ENCODE measurements at regions of chr11 and their contacts with region 1.

Region 1: GRCh38 chr11:78645226-78646202 is 70.8 kb upstream of the NARS2 start:
- DNase-seq: peak; percentile 80
- H3K4me3 ChIP-seq: no peak overlapping the region; a peak in 1 of 4 replicates
- H3K27ac ChIP-seq: no peak overlapping the region
- H3K4me1 ChIP-seq: peaks cover 0 to 8% of the 10 kb centered on the region in 2 experiments; a peak in 1 of 4 replicates
- H3K27me3 ChIP-seq: no peaks in the 10 kb centered on the region
- CTCF ChIP-seq: peak; percentile 98
- EP300 ChIP-seq: no peak
- RAD21 ChIP-seq: peak; percentile 97

Region 2: GRCh38 chr11:78504181-78504580 is 141.3 kb before region 1 on chr11:
- CTCF ChIA-PET with region 1: no interaction called
- POLR2A ChIA-PET with region 1: no interaction called
- DNase-seq: no peak
- H3K4me3 ChIP-seq: no peak overlapping the region
- H3K27ac ChIP-seq: peak overlapping the region in 1 of 2 experiments; percentile 48; a peak in 2 of 4 replicates
- H3K4me1 ChIP-seq: peaks cover 0 to 8% of the 10 kb centered on the region in 2 experiments; a peak in 2 of 4 replicates
- H3K27me3 ChIP-seq: no peaks in the 10 kb centered on the region
- CTCF ChIP-seq: no peak
- EP300 ChIP-seq: no peak
- RAD21 ChIP-seq: no peak

Region 3: GRCh38 chr11:78533399-78533798 is 112.1 kb before region 1 on chr11:
- CTCF ChIA-PET with region 1: no interaction called
- POLR2A ChIA-PET with region 1: no interaction called
- DNase-seq: no peak
- H3K4me3 ChIP-seq: no peak overlapping the region
- H3K27ac ChIP-seq: no peak overlapping the region
- H3K4me1 ChIP-seq: no peaks in the 10 kb centered on the region
- H3K27me3 ChIP-seq: no peaks in the 10 kb centered on the region
- CTCF ChIP-seq: no peak
- EP300 ChIP-seq: no peak
- RAD21 ChIP-seq: no peak

Region 4: DNA sequence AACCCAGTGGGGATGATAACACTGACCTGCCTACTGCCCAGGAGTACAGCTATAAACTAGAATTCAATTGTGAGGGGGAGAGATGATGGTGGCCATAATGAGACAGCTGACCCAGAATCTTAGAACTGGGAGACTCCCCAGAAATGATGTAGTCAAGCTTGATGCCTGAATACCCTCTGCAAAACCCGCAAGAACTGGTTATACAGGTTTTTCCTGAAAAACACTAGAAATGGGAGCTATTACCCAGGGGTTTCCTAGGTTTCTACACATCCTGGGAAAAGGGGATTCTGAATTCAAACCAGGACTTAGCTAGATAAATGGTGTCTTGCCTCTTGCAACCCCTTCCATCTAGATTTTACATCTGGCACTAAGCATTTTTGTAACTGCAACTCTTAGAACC is 43.0 kb after region 1 on chr11:
- CTCF ChIA-PET with region 1: interaction called, 13 read pairs
- POLR2A ChIA-PET with region 1: no interaction called
- DNase-seq: no peak
- H3K4me3 ChIP-seq: no peak overlapping the region
- H3K27ac ChIP-seq: no peak overlapping the region
- H3K4me1 ChIP-seq: peaks cover 0 to 3% of the 10 kb centered on the region in 2 experiments; a peak in 2 of 4 replicates
- H3K27me3 ChIP-seq: no peaks in the 10 kb centered on the region
- CTCF ChIP-seq: no peak
- EP300 ChIP-seq: no peak
- RAD21 ChIP-seq: no peak

Region 5: DNA sequence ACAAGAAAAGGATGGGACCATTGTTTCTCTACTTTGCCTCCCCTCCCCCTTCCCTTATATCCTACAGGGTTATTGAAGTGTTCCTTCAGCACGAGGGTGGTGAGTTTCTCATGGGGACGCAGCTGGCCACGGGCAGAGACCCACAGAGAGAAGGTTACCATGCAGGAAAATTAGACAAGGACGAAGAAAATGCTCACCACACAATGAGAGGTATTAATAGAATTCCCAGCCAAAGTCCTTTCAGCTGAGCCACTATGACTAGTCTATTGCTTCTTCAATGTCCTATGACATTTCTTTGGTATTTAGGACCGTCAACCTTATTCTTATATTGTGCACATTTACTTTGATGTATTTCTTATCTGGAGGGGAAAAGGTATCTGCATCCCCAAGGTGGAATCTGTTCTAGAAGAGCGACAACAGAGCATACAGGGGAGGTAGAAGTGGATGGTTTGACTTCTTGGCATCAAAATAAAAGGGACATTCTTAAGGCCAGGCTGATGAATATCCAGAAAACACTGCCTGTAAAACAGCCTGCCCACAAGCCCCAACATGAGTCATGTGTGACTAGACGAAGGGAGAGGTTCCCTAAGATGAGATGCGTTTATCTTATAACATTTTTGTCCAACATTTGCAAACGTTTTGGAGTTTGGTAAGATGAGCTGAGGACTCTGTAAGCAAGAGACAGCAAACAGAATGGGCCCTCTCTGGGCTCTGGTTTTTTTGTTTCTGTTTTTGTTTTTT is 139.0 kb after region 1 on chr11:
- CTCF ChIA-PET with region 1: interaction called, 11 read pairs
- POLR2A ChIA-PET with region 1: no interaction called
- DNase-seq: no peak
- H3K4me3 ChIP-seq: no peak overlapping the region; a peak in 1 of 4 replicates
- H3K27ac ChIP-seq: peak overlapping the region; percentile 48 to 64; a peak in 3 of 4 replicates
- H3K4me1 ChIP-seq: peaks cover 9 to 35% of the 10 kb centered on the region in 2 experiments; a peak in 3 of 4 replicates
- H3K27me3 ChIP-seq: no peaks in the 10 kb centered on the region
- CTCF ChIP-seq: no peak
- EP300 ChIP-seq: no peak
- RAD21 ChIP-seq: no peak

Region 6: GRCh38 chr11:78851878-78852586 is 206.5 kb after region 1 on chr11:
- CTCF ChIA-PET with region 1: interaction called, 14 read pairs
- POLR2A ChIA-PET with region 1: no interaction called
- DNase-seq: peak; percentile 72
- H3K4me3 ChIP-seq: no peak overlapping the region
- H3K27ac ChIP-seq: peak overlapping the region in 1 of 2 experiments; percentile 87; a peak in 2 of 4 replicates
- H3K4me1 ChIP-seq: peaks cover 0 to 59% of the 10 kb centered on the region in 2 experiments; a peak in 3 of 4 replicates
- H3K27me3 ChIP-seq: no peaks in the 10 kb centered on the region
- CTCF ChIP-seq: no peak
- EP300 ChIP-seq: no peak; a peak in 2 of 4 replicates
- RAD21 ChIP-seq: peak; percentile 20; the same call in 1 of the 2 replicates

Region 7: DNA sequence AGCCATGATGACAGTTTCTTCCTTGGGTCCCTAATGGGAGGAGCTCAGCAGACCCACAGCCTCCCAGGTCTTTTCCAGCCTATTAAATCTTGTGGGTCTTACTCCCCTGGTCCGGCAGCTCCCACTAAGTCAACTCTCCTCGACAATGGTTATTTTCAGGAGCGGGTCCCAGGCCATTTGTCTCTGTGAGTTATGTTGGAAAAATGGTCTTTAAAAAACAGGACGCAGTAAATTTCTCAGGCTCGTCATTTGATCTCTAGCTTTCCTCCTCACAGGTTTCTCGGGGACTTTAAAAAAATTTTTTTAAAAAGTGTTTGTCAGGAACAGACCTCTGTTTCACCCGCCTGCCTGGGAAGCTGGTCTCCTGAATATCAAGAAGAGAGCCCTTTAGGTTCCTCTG is 326.7 kb after region 1 on chr11:
- CTCF ChIA-PET with region 1: no interaction called
- POLR2A ChIA-PET with region 1: no interaction called
- DNase-seq: no peak
- H3K4me3 ChIP-seq: no peak overlapping the region
- H3K27ac ChIP-seq: no peak overlapping the region
- H3K4me1 ChIP-seq: peaks cover 0 to 6% of the 10 kb centered on the region in 2 experiments; a peak in 1 of 4 replicates
- H3K27me3 ChIP-seq: no peaks in the 10 kb centered on the region
- CTCF ChIP-seq: no peak
- EP300 ChIP-seq: no peak
- RAD21 ChIP-seq: no peak

Region 8: GRCh38 chr11:79052544-79052943 is 407.0 kb after region 1 on chr11:
- CTCF ChIA-PET with region 1: interaction called, 17 read pairs
- POLR2A ChIA-PET with region 1: no interaction called
- DNase-seq: no peak
- H3K4me3 ChIP-seq: no peak overlapping the region
- H3K27ac ChIP-seq: peak overlapping the region in 1 of 2 experiments; percentile 24; a peak in 1 of 4 replicates
- H3K4me1 ChIP-seq: peaks cover 0 to 38% of the 10 kb centered on the region in 2 experiments; a peak in 2 of 4 replicates
- H3K27me3 ChIP-seq: no peaks in the 10 kb centered on the region
- CTCF ChIP-seq: peak; percentile 50
- EP300 ChIP-seq: no peak
- RAD21 ChIP-seq: peak; percentile 53

Region 9: DNA sequence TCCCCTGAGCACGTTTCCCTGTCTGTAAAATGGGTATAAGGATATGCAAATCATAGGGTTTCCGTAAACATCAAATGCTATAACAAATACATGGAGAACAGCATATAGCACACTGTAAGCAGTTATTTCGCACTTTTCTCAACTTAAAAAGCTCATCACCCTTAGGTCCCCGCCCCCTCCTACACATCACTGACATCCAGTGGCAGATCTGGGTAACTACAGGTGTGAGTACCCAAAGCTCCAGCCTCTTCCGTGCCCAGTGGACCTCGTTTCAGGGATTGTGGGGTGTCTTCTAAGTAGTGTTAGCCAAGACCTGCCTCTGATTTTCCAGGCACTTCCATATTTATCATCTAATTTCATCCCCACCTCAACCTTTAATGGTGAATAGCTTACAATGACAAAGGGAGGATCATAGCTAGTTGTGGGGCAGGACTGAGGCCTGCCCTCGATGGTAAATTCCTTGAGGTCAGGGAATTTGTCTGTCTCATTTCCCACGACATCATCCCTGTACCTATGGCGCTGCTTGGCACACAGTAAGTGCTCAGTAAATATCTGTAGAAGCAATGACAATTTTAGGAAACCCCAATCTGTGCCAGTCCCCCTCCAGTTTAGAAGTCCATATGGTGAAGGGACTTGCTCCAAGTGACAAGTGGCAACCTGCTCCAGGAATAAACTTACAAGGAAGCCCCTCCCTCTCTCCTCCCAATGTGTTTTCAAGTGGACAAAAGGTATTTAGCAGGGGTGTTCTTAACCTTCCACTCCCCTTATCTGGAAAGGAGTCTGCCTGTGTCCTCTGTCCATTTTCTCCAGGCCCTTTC is 454.8 kb after region 1 on chr11:
- CTCF ChIA-PET with region 1: interaction called, 60 read pairs
- POLR2A ChIA-PET with region 1: no interaction called
- DNase-seq: peak; percentile 82
- H3K4me3 ChIP-seq: no peak overlapping the region
- H3K27ac ChIP-seq: no peak overlapping the region; a peak in 2 of 4 replicates
- H3K4me1 ChIP-seq: peaks cover 0 to 46% of the 10 kb centered on the region in 2 experiments; a peak in 1 of 4 replicates
- H3K27me3 ChIP-seq: no peaks in the 10 kb centered on the region
- CTCF ChIP-seq: peak; percentile 79
- EP300 ChIP-seq: no peak
- RAD21 ChIP-seq: peak; percentile 86

Measured in SK-N-SH (cell line).